ENCODE measurements at regions of chr7 and their contacts with region 1.

Region 1: GRCh38 chr7:55534175-55534915 is 38.0 kb downstream of the VOPP1 start:
- DNase-seq: peak; percentile 94
- ATAC-seq: peak; percentile 67
- H3K4me3 ChIP-seq: peak overlapping the region; percentile 2 to 59 (median 34)
- H3K4me3 Mint-ChIP-seq: peak overlapping the region; percentile 83
- H3K27ac ChIP-seq: peak overlapping the region; percentile 100
- H3K27ac Mint-ChIP-seq: peak overlapping the region; percentile 99
- H3K4me1 ChIP-seq: peaks cover 75 to 94% of the 10 kb centered on the region in 2 donors
- H3K4me1 Mint-ChIP-seq: peaks cover 94% of the 10 kb centered on the region
- H3K27me3 ChIP-seq: no peaks in the 10 kb centered on the region
- H3K27me3 Mint-ChIP-seq: no peaks in the 10 kb centered on the region
- CTCF ChIP-seq: no peak

Region 2: DNA sequence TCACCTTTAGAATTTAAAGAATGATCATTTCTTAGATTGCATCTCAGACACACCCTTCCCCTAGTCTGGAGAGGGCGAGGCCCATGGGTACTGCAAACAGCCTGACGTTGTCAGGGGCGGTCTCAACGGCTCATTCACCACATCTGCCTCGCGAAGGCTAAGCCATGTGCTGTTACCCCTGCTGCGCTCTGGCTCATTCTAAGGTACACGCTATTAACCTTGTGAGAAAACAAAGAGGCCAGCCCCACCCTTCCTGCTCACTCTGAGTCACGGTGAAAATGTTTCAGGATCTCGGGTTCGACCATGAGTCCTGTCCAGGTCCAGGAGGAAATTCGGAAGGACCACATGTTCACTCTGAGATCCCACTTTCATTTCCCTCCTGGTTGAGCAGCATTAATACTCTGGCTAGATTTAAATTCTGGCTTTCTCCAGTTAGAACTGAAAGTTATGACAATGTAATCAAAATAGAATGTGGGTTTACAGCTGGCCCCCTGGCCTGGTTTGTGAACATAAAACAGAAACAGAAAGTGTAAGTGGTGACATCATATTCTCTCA is 460.3 kb before region 1 on chr7:
- CTCF ChIA-PET with region 1: no interaction called
- POLR2A ChIA-PET with region 1: no interaction called
- intact Hi-C with region 1: loop called (anchors 5 kb)
- DNase-seq: peak; percentile 61
- ATAC-seq: peak; percentile 91
- H3K4me3 ChIP-seq: peak overlapping the region in 3 of 5 experiments; percentile 13 to 42 (median 40)
- H3K4me3 Mint-ChIP-seq: peak overlapping the region; percentile 84
- H3K27ac ChIP-seq: peak overlapping the region; percentile 71 to 74
- H3K27ac Mint-ChIP-seq: peak overlapping the region; percentile 95
- H3K4me1 ChIP-seq: peaks cover 12 to 15% of the 10 kb centered on the region in 2 donors
- H3K4me1 Mint-ChIP-seq: peaks cover 22% of the 10 kb centered on the region
- H3K27me3 ChIP-seq: peaks cover 0 to 14% (median 3%) of the 10 kb centered on the region in 4 experiments
- H3K27me3 Mint-ChIP-seq: no peaks in the 10 kb centered on the region
- CTCF ChIP-seq: no peak

Region 3: DNA sequence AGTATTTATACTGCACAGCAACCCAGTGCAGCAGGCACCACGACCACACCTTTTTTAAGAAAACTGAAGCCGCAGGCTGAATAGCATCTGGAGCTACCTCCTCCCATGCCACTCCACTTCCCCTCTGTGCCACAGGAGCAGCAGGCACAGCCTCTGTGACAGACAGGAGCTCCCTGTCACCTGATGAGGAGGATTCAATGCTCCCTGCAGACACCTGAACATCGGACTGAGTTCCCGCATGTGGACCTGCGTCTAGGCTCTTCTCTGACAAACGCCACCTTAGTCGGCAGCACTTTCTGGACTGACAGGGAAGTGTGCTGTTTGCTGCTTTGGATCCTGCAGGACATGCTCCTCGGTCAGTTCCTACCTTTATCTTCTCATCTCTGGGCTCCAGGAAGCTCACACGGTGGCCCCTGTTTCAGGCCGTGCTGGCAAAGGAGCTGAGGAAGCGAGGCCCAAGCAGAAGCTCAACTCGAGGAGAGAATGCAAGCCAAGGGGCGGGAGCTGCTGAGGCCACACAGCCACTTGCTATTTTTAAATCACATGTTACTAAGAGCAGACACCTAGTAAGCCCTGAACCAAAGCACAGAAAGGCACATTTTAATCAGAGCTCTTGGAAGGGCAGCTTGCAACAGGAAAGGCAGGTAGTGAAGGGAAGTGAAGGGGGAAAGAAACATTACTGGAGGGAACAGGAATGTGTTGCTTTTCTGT is 18.6 kb before region 1 on chr7:
- CTCF ChIA-PET with region 1: interaction called, 4 read pairs
- POLR2A ChIA-PET with region 1: interaction called, 60 read pairs
- intact Hi-C with region 1: loop called (anchors 2 kb)
- DNase-seq: peak; percentile 32
- ATAC-seq: peak; percentile 26
- H3K4me3 ChIP-seq: peak overlapping the region in 2 of 5 experiments; percentile 22 to 24
- H3K4me3 Mint-ChIP-seq: peak overlapping the region; percentile 65
- H3K27ac ChIP-seq: peak overlapping the region; percentile 28 to 63
- H3K27ac Mint-ChIP-seq: peak overlapping the region; percentile 61
- H3K4me1 ChIP-seq: peaks cover 18 to 78% of the 10 kb centered on the region in 2 donors
- H3K4me1 Mint-ChIP-seq: peaks cover 85% of the 10 kb centered on the region
- H3K27me3 ChIP-seq: no peaks in the 10 kb centered on the region
- H3K27me3 Mint-ChIP-seq: no peaks in the 10 kb centered on the region
- CTCF ChIP-seq: no peak

Region 4: DNA sequence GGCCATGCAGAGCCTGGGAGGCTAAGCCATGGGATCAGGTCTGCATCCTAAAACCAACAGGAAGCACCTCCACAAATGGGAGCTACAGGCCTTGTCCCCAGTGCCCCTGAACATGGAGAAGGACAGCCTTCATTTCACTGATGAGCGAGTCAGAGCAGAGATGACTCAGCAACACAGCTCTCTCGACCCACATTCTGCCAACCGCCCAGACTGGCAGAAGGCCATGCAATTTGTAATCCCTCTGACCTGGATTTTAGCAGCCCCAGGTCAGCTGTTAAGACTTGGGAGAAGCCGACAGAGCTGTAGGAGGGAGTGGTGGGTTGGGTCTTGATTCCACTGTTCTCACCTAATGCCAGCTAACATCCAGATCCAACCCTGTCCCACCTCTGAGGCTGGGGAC is 12.5 kb after region 1 on chr7:
- CTCF ChIA-PET with region 1: interaction called, 24 read pairs
- POLR2A ChIA-PET with region 1: interaction called, 27 read pairs
- intact Hi-C with region 1: loop called (anchors 1 kb)
- DNase-seq: no peak
- ATAC-seq: peak; percentile 23
- H3K4me3 ChIP-seq: no peak overlapping the region
- H3K4me3 Mint-ChIP-seq: peak overlapping the region; percentile 19
- H3K27ac ChIP-seq: no peak overlapping the region
- H3K27ac Mint-ChIP-seq: peak overlapping the region; percentile 53
- H3K4me1 ChIP-seq: peaks cover 59 to 71% of the 10 kb centered on the region in 2 donors
- H3K4me1 Mint-ChIP-seq: peaks cover 84% of the 10 kb centered on the region
- H3K27me3 ChIP-seq: no peaks in the 10 kb centered on the region
- H3K27me3 Mint-ChIP-seq: no peaks in the 10 kb centered on the region
- CTCF ChIP-seq: no peak

Region 5: DNA sequence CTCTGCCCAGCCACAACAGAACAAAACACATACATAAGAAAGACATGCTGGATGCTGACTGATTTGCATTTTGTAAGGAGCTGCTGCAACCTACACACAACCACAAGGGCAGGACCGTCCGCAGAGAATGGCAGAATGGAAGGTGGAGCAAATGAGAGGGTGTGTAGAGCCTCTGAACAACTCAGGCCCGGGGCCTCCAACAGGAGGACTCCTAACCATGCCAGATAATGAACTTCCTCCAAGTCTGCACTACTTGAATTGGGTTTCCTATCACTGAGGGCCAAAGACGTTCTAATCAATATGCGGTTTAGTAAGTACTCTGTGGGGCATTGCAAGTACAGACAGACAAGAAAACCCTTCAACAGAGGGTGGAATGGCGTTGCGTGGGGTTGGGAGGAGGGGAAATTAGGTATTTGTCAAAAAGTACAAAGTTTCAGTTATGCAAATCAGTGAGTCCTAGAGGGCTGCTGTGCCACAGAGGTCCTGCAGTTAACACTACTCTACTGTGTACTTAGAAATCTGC is 23.4 kb after region 1 on chr7:
- CTCF ChIA-PET with region 1: interaction called, 5 read pairs
- POLR2A ChIA-PET with region 1: interaction called, 5 read pairs
- intact Hi-C with region 1: loop called (anchors 2 kb)
- DNase-seq: peak; percentile 59
- ATAC-seq: peak; percentile 79
- H3K4me3 ChIP-seq: peak overlapping the region in 2 of 5 experiments; percentile 20 to 43
- H3K4me3 Mint-ChIP-seq: peak overlapping the region; percentile 80
- H3K27ac ChIP-seq: peak overlapping the region; percentile 52 to 80
- H3K27ac Mint-ChIP-seq: peak overlapping the region; percentile 86
- H3K4me1 ChIP-seq: peaks cover 87 to 100% of the 10 kb centered on the region in 2 donors
- H3K4me1 Mint-ChIP-seq: peaks cover 92% of the 10 kb centered on the region
- H3K27me3 ChIP-seq: no peaks in the 10 kb centered on the region
- H3K27me3 Mint-ChIP-seq: no peaks in the 10 kb centered on the region
- CTCF ChIP-seq: no peak

Region 6: DNA sequence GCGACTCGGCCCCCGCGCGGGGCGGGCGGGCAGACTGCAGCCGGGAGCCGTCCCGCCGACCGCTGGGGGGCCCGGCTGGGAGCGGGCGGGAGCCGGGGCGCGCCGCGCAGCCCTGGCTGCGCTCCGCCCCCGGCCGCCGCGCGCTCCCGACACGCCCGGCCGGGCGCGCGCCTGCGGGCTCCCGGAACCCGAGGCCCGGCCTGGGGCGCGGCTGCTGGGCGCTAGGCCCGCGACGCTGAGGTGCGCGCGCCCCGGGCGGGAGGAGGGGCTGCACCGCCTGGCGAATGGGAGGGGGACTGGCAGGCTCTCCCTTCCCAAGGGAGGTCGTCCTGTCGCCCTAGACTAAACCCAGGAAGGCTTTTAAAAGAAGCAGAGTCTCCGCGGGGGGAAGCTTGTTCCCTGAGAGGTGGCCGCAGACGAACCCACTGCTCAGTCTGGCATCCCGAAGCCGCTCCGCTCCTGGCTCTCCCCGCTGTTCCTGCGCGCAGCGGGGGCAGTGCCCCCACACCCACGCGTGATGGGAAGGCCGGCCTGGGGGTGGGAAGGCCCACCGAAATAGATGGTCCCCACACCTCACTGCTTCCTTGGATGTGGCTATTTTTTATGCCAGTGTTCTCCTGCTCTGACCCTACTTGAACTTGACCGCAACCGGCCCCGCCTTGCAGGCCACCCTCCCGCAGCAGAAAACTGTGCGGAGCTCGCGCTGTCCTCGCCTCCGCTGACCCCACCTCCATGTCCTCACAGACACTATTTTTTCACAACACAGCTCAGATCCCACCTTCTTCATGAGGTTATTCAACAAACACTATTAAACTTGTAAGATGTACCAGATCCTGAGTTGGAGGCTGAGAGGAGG is 38.3 kb after region 1 on chr7 and contains the start of gene VOPP1:
- CTCF ChIA-PET with region 1: interaction called, 73 read pairs
- POLR2A ChIA-PET with region 1: interaction called, 157 read pairs
- intact Hi-C with region 1: loop called (anchors 1 kb)
- DNase-seq: peak; percentile 85
- ATAC-seq: peak; percentile 70
- H3K4me3 ChIP-seq: peak within 1 kb of the TSS; percentile 32 to 97 (median 79)
- H3K4me3 Mint-ChIP-seq: peak within 1 kb of the TSS; percentile 91
- H3K27ac ChIP-seq: peak within 1 kb of the TSS; percentile 74 to 85
- H3K27ac Mint-ChIP-seq: peak within 1 kb of the TSS; percentile 96
- H3K4me1 ChIP-seq: peaks cover 49 to 57% of the 10 kb centered on the region in 2 donors
- H3K4me1 Mint-ChIP-seq: peaks cover 49% of the 10 kb centered on the region
- H3K27me3 ChIP-seq: no peaks in the 10 kb centered on the region
- H3K27me3 Mint-ChIP-seq: no peaks in the 10 kb centered on the region
- CTCF ChIP-seq: no peak
- total RNA-seq, gene VOPP1: 256 and 267 TPM in 2 replicates

Region 7: DNA sequence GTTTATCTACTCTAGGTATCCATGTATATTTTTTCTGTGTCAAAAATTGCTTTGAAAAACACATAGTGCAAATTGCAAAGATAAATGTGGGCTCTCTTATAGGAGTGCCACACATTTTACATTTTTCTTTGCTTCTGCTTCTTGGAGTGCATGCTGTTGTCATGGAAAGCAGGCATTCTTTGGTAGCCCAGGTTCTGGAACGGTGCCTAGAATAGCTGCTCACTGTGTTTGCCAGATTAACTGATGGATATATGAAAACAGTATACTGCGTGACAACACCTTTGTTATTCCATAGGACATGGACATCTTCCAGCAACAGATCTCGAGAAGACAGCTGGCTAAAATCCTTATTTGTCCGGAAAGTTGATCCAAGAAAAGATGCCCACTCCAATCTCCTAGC is 443.5 kb after region 1 on chr7:
- CTCF ChIA-PET with region 1: no interaction called
- POLR2A ChIA-PET with region 1: no interaction called
- intact Hi-C with region 1: no loop called
- DNase-seq: no peak
- ATAC-seq: no peak
- H3K4me3 ChIP-seq: no peak overlapping the region
- H3K4me3 Mint-ChIP-seq: no peak overlapping the region
- H3K27ac ChIP-seq: no peak overlapping the region
- H3K27ac Mint-ChIP-seq: no peak overlapping the region
- H3K4me1 ChIP-seq: no peaks in the 10 kb centered on the region
- H3K4me1 Mint-ChIP-seq: peaks cover 7% of the 10 kb centered on the region
- H3K27me3 ChIP-seq: no peaks in the 10 kb centered on the region
- H3K27me3 Mint-ChIP-seq: no peaks in the 10 kb centered on the region
- CTCF ChIP-seq: no peak